Head of caudate nucleus (tissue), 42 donors: ENCODE measurements at regions of chr10 and their contacts with region 1.

Region 1: DNA sequence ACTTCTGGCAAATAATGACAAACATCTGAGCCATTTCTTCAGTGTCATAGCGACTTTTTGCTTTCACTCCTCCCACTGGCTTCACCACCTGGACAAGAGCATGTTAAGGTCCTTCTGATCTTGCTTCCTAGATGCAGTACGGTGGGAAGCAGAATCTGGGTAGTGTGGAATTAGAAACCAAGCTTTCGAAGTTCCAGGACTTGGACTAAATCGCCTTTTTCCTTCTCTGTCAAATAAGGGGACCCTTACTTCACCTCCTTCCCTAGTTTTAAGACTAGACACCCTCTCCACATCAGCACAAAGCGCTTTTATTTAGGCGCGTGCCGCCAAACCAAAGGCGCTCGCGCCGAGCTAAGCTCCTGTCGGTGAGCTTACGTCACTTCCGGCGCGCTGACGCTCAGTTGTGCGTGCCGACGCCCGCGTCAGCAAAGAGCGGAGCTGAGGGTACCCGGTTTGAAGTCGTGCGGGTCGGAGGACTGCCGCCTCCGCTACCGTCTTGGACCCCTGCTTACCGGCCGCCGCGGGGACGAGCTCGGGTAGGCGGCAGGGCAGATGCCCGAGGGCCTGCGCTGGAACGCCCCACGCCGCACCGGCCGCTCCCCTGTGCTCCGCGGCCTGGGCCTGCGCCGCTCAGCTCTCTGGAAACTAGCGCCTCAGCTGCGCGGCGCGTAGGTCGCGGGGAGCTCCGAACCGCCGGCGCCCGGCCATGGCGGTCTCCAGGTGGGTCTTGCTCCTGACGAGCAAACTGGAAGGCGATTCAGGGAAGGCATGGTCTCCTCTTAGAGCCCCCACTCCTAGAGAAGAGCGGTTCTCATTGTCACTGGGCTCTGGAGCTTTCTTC is at the start of gene BTAF1:
- DNase-seq: peak; percentile 84 to 97 (median 95)

Region 2: DNA sequence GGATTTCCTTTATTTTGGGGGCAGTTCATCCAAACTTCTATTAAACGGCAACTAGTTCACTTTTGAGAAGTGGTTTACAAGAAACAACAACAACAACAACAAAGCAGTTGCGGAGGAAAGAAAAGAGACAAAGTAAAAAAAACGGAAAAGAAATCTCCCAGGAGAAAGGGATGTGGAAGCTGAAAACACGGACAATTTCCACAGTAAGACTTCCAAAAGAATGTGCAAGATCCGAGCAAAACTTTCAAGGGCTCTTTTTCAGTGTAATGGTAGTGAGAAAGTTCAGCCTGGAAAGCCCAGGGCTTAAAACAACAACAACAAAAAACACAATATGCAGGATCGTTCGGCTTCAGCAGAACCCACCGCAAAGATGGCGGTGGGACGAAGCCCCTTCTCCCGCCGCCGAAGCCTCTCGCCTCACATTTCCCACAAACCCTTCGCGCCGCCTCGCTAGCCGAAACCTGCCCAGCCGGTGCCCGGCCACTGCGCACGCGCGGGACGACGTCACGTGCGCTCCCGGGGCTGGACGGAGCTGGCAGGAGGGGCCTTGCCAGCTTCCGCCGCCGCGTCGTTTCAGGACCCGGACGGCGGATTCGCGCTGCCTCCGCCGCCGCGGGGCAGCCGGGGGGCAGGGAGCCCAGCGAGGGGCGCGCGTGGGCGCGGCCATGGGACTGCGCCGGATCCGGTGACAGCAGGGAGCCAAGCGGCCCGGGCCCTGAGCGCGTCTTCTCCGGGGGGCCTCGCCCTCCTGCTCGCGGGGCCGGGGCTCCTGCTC is 125.5 kb before region 1 on chr10 and contains the start of gene TNKS2:
- intact Hi-C with region 1: loop called (anchors 5 kb)
- DNase-seq: peak; percentile 68 to 96 (median 91)